BJ (cell line): ENCODE measurements at regions of chr19 and their contacts with region 1.

Region 1: DNA sequence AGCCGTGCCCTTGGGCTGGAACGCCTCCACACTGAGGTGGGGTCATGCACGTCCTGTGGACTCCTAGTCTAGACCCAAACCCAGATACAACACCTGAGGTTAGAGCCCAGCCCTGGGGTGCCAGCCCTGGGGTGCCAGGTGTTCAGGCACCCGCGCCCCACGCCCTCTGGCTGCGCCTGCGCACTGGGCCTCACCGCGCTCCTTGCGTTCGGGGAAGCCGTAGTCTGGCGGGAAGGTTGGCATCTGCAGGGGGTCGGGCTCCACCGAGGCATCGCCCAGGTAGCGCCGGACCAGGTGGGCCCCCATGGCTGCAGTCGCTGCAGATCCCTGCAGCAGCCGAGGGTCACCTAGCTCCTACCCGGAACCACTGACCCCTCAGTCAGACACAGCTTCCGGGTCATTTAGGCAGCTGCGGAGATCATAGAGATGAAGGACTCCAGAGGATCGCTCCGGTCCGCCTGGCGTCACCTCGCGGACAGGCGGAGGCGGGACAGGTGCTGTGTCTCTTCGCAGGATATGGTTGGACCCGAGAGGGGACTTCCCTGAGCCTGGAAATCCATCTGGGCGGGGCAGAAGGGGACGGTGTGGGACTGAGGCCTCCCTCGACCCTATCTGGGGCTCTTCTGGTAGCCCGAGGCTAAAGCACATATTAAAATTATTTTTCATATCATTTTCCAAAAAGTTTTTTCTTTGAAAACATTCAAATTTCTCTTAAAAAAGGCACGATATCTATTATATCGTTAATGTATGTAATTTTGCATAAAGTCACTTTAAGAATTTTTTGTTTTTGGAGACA is at the start of gene NDUFB7:
- DNase-seq: peak; percentile 58
- H3K4me3 ChIP-seq: peak within 1 kb of the TSS; percentile 95
- H3K27me3 ChIP-seq: no peaks in the 10 kb centered on the region
- CTCF ChIP-seq: peak; percentile 87
- polyA plus RNA-seq, gene NDUFB7: 135 and 147 TPM in 2 replicates

Region 2: GRCh38 chr19:14689598-14690503 is 118.0 kb after region 1 on chr19 and contains the start of gene ZNF333:
- CTCF ChIA-PET with region 1: interaction called, 62 read pairs
- POLR2A ChIA-PET with region 1: no interaction called
- DNase-seq: peak; percentile 20
- H3K4me3 ChIP-seq: peak within 1 kb of the TSS; percentile 66
- H3K27me3 ChIP-seq: no peaks in the 10 kb centered on the region
- CTCF ChIP-seq: no peak
- polyA plus RNA-seq, gene ZNF333: 12.2 and 16.4 TPM in 2 replicates

Region 3: DNA sequence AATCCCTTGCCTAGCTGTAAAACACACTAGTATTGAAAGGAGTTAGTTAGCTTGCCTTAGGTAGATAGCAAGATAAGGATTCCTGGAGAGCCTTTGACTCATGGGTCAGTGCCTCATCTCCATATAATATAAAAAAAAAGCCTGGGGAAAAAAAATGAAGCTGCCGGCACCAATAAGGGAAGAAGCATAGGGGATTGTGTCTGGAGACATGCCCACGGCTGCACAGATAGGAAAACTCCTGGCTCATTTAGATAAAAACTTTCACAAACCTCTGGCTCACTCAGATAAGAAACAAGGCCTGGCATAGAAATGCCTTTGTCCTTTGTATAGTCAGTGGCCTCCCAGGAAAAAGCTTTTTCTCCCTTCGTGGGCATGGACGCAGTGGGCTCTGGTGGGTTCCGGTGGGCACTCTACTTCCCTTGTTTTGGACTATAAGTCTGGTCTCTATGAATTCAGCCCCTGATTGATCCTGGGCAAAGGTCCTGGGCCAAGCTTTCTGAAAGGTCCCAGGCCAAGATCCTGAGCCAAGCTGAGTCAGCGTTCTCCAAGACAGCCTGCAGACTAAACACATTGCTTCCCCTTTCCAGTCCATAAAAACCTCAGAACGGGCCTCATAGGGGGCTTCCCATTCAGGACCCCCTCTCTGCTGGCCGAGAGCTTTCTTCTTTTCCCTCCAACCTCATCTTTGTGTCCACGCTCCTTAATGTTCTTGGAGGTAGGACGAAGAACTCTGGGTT is 318.9 kb after region 1 on chr19:
- CTCF ChIA-PET with region 1: interaction called, 15 read pairs
- POLR2A ChIA-PET with region 1: no interaction called
- DNase-seq: no peak
- H3K4me3 ChIP-seq: no peak overlapping the region
- H3K27me3 ChIP-seq: peaks cover 2% of the 10 kb centered on the region; the same call in 1 of the 2 replicates
- CTCF ChIP-seq: no peak